ENCODE measurements at regions of chr12 and their contacts with region 1.

Region 1: DNA sequence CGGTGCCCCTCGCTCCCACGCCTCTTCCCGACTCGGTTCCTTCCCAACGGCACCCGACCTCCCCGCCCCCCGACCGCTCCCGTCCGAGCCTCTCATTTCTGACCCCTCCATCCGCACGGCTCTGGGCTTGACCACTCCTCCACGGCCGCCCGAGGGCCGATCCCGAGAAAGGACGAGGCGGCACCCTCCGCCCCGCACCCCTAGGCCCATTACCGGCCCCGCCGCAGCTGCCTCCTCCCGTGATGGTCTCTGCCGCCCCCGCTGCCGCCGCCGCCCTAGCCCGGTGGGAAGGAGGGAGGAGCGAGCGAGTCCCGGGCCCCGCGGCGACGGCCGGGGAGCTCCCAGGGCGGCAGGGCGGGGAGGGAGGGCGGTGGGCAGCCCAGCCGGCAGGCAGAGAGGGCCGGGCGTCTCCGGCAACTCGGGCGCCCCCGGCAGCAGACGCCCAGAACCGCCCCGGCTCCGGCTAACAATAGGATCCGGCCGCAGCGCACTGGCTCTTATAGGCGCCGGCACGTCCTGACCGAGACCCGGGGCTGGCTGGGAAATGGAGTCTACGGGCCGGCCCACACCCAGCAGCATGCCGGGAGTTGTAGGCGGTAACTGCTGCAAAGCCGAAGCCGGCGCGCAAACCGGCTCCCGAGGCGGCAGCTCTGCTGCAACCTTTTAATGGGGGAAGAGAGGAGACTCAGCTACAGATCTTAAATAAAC is at the start of gene CSRNP2:
- DNase-seq: peak; percentile 98
- H3K4me3 ChIP-seq: peak within 1 kb of the TSS; percentile 100
- H3K27ac ChIP-seq: peak within 1 kb of the TSS; percentile 91
- H3K4me1 ChIP-seq: peaks cover 4% of the 10 kb centered on the region
- H3K27me3 ChIP-seq: no peaks in the 10 kb centered on the region
- CTCF ChIP-seq: no peak
- total RNA-seq, gene CSRNP2: 38.8 and 41.5 TPM in 2 replicates

Region 2: DNA sequence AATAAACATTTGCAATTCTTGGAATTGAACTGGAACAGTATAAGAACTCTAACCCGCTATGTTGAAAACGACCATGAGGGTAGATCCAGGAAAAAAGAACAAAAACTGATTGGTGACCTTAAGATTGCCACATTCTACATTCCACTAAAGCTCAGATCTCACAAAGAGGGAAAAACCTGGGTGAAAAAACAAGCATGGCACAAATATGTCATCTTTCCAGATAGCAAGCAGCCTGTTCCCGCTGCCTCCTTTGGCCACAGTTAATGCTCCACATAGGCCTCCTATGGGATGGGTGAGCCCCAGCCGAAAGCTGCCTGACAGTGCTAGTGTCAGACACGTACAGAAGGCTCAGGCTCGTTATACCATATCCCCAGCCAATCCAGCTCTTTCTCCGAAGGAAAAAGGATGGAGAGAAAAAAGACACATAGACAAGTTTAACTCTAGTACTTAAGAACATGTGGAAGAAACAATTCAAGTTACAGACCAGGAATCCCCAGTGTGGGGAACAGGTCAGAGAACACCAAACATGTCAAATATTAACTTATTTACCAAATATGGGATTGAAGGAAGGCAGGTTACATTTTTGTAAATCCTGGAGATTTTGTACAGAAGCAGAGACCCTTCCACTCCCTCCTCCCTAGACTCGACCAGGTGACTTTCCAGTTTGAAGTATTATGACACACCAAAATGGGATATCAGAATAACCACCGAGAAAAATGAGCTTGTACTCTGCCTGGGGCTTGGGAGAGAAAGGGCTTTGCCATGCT is 20.5 kb before region 1 on chr12:
- CTCF ChIA-PET with region 1: no interaction called
- POLR2A ChIA-PET with region 1: interaction called, 11 read pairs
- intact Hi-C with region 1: no loop called
- DNase-seq: no peak
- H3K4me3 ChIP-seq: no peak overlapping the region
- H3K27ac ChIP-seq: no peak overlapping the region
- H3K4me1 ChIP-seq: no peaks in the 10 kb centered on the region
- H3K27me3 ChIP-seq: no peaks in the 10 kb centered on the region
- CTCF ChIP-seq: no peak

Region 3: DNA sequence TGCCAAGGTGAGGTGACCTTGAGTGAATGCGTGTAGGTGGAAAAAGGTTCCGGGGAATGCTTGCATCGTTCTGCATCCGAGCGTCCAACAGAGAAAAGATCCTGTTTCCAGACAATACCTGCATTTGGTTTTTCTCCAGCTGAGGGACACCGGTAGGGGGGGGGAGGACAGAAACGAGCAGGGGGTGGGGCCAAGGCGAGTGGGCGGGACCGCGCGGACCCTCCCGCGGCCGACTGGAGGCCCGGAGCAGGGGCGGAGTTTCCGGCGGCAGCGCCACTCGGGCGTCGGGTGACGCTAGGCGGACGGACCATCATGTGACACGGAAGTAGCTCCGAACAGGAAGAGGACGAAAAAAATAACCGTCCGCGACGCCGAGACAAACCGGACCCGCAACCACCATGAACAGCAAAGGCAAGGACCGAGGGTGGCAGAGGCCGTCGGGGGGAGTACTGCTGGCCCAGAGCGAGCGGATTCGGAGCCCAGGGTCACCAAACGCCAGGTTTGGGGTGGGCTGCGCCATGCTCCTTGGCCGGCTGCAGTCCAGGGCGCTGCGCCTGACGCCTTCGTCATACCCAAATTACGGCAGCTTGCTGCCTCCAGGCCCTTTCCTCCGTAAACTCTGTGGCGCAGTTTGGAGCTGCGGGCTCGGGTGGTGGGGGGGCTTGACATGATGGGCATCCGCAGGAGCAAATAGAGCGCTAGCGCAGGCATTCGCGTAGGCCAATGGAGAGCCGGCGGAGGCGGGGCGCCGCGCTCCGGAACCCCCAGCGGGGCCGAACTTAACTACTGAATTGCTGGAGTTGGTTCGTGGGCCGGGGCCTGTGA is 155.4 kb after region 1 on chr12 and contains the start of gene DAZAP2:
- CTCF ChIA-PET with region 1: no interaction called
- POLR2A ChIA-PET with region 1: no interaction called
- intact Hi-C with region 1: loop called (anchors 10 kb)
- DNase-seq: peak; percentile 97
- H3K4me3 ChIP-seq: peak within 1 kb of the TSS; percentile 84
- H3K27ac ChIP-seq: peak within 1 kb of the TSS; percentile 99
- H3K4me1 ChIP-seq: peaks cover 8% of the 10 kb centered on the region
- H3K27me3 ChIP-seq: no peaks in the 10 kb centered on the region
- CTCF ChIP-seq: peak; percentile 40; the same call in 1 of the 2 replicates
- total RNA-seq, gene DAZAP2: 125 and 138 TPM in 2 replicates

Region 4: GRCh38 chr12:51980051-51980808 is 897.0 kb after region 1 on chr12:
- CTCF ChIA-PET with region 1: no interaction called
- POLR2A ChIA-PET with region 1: no interaction called
- intact Hi-C with region 1: no loop called
- DNase-seq: peak; percentile 77
- H3K4me3 ChIP-seq: no peak overlapping the region
- H3K27ac ChIP-seq: no peak overlapping the region
- H3K4me1 ChIP-seq: peaks cover 12% of the 10 kb centered on the region
- H3K27me3 ChIP-seq: no peaks in the 10 kb centered on the region
- CTCF ChIP-seq: peak; percentile 98